K562 (cell line): ENCODE measurements at regions of chr14 and their contacts with region 1.

Region 1: GRCh38 chr14:62126879-62127478 is 364.8 kb downstream of the SNAPC1 start:
- DNase-seq: peak; percentile 10 to 35 (median 23)
- ATAC-seq: peak; percentile 78
- H3K4me3 ChIP-seq: no peak overlapping the region
- H3K27ac ChIP-seq: no peak overlapping the region
- H3K4me1 ChIP-seq: no peaks in the 10 kb centered on the region
- H3K27me3 ChIP-seq: no peaks in the 10 kb centered on the region
- CTCF ChIP-seq: peak in 2 of 3 experiments; percentile 43 to 65; a peak in 4 of 6 replicates
- EP300 ChIP-seq: no peak
- POLR2A ChIP-seq: no peak
- RAD21 ChIP-seq: peak; percentile 56 to 69

Region 2: DNA sequence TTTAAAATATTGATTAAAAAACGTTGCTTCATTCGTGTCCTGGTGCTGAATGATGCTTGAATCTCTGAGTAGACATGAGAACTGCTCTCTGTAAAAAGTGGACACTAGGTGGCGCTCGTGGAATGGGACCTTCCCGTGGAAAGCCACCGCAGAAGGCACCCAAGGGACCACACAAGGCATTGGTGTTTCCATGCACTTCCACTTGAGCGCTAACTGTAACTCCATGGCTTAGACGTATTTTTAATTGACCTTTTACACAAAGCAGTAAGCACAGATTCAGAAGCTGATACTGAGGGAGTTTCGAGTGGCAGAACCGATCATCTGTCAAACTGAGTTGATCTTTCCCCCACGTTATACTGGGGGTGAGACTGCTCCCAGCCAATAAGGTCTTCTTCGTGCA is 670.3 kb before region 1 on chr14:
- CTCF ChIA-PET with region 1: no interaction called
- POLR2A ChIA-PET with region 1: no interaction called
- in situ Hi-C with region 1: loop called (anchors 10 kb)
- intact Hi-C with region 1: loop called (anchors 5 kb)
- DNase-seq: peak; percentile 68 to 76 (median 72)
- ATAC-seq: peak; percentile 93
- H3K4me3 ChIP-seq: no peak overlapping the region
- H3K27ac ChIP-seq: no peak overlapping the region
- H3K4me1 ChIP-seq: peaks cover 0 to 10% of the 10 kb centered on the region in 2 experiments; a peak in 4 of 5 replicates
- H3K27me3 ChIP-seq: no peaks in the 10 kb centered on the region
- CTCF ChIP-seq: peak; percentile 69 to 72 (median 71)
- EP300 ChIP-seq: no peak
- POLR2A ChIP-seq: no peak
- RAD21 ChIP-seq: peak; percentile 63 to 73

Region 3: GRCh38 chr14:61461808-61462275 is 665.1 kb before region 1 on chr14:
- CTCF ChIA-PET with region 1: no interaction called
- POLR2A ChIA-PET with region 1: no interaction called
- in situ Hi-C with region 1: loop called (anchors 10 kb)
- intact Hi-C with region 1: loop called (anchors 5 kb)
- DNase-seq: peak; percentile 43 to 60 (median 54)
- ATAC-seq: peak; percentile 86
- H3K4me3 ChIP-seq: no peak overlapping the region
- H3K27ac ChIP-seq: no peak overlapping the region
- H3K4me1 ChIP-seq: peaks cover 4 to 19% of the 10 kb centered on the region in 2 experiments; a peak in 4 of 5 replicates
- H3K27me3 ChIP-seq: no peaks in the 10 kb centered on the region; a peak in 1 of 5 replicates
- CTCF ChIP-seq: peak; percentile 47 to 65 (median 55); a peak in 5 of 6 replicates
- EP300 ChIP-seq: no peak
- POLR2A ChIP-seq: no peak
- RAD21 ChIP-seq: peak; percentile 78 to 81

Region 4: GRCh38 chr14:61894452-61895077 is 232.4 kb before region 1 on chr14:
- CTCF ChIA-PET with region 1: no interaction called
- POLR2A ChIA-PET with region 1: no interaction called
- in situ Hi-C with region 1: no loop called
- intact Hi-C with region 1: loop called (anchors 1 kb)
- DNase-seq: peak; percentile 40 to 63 (median 50)
- ATAC-seq: peak; percentile 88
- H3K4me3 ChIP-seq: no peak overlapping the region
- H3K27ac ChIP-seq: no peak overlapping the region
- H3K4me1 ChIP-seq: no peaks in the 10 kb centered on the region
- H3K27me3 ChIP-seq: no peaks in the 10 kb centered on the region; a peak in 1 of 5 replicates
- CTCF ChIP-seq: peak; percentile 55 to 64 (median 63)
- EP300 ChIP-seq: no peak
- POLR2A ChIP-seq: no peak
- RAD21 ChIP-seq: peak; percentile 19 to 59; a peak in 3 of 4 replicates

Region 5: DNA sequence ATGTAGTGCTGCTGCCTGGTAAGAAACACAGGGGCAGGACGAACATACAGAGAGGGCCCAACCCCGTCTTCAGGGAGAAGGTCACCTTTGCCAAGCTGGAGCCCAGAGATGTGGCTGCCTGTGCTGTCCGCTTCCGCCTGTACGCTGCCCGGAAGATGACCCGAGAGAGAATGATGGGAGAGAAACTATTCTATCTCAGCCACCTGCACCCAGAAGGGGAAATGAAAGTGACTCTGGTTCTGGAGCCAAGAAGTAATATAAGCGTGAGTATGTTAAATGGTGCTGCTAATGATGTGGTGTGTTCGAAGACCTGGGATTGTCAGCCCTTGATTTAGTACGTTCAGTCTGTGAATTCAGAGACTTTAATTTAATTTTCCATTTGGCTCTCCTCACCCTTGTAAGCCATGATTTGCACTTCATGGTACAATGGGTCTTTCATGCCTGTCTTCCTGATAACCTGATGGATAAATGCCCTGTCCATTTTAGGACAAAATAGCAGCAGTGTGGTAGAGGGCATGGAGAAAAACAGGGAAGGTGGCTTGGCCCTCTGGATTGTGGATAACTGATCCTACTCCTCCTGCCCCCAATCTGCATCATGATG is 45.9 kb before region 1 on chr14:
- CTCF ChIA-PET with region 1: no interaction called
- POLR2A ChIA-PET with region 1: no interaction called
- in situ Hi-C with region 1: no loop called
- intact Hi-C with region 1: no loop called
- DNase-seq: no peak
- ATAC-seq: no peak
- H3K4me3 ChIP-seq: no peak overlapping the region
- H3K27ac ChIP-seq: no peak overlapping the region
- H3K4me1 ChIP-seq: no peaks in the 10 kb centered on the region
- H3K27me3 ChIP-seq: no peaks in the 10 kb centered on the region
- CTCF ChIP-seq: no peak
- EP300 ChIP-seq: no peak
- POLR2A ChIP-seq: no peak
- RAD21 ChIP-seq: no peak

Region 6: DNA sequence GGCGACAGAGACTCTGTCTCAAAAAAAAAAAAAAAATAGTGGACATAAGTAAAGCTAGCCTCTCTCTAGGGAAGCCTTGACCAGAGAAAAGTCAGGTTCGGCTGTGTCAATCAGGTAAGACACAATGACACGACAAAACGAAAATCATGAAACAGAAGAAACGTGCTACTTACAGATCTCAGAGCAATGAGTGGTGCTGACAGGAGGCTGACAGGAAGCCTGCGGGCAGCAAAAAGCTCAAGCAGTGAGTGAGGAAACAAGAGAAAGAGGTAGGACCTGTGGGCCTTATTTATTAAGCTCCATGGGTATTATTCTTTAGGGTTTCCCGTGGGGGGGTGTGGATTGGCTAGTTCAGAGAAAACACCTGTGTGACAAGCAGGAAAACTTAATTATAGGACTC is 555.2 kb after region 1 on chr14:
- CTCF ChIA-PET with region 1: no interaction called
- POLR2A ChIA-PET with region 1: no interaction called
- in situ Hi-C with region 1: no loop called
- intact Hi-C with region 1: no loop called
- DNase-seq: no peak
- ATAC-seq: no peak
- H3K4me3 ChIP-seq: no peak overlapping the region
- H3K27ac ChIP-seq: no peak overlapping the region
- H3K4me1 ChIP-seq: no peaks in the 10 kb centered on the region
- H3K27me3 ChIP-seq: no peaks in the 10 kb centered on the region
- CTCF ChIP-seq: no peak
- EP300 ChIP-seq: no peak
- POLR2A ChIP-seq: no peak
- RAD21 ChIP-seq: no peak